Left lung (tissue), 14 donors: ENCODE measurements at regions of chr4 and their contacts with region 1.

Region 1: GRCh38 chr4:186297013-186297645 is 31.1 kb downstream of the F11 start:
- DNase-seq: peak in 2 of 4 donors; percentile 54 to 70
- ATAC-seq: peak; percentile 73
- H3K4me3 ChIP-seq: no peak overlapping the region
- H3K27ac ChIP-seq: no peak overlapping the region
- H3K4me1 ChIP-seq: no peaks in the 10 kb centered on the region
- H3K27me3 ChIP-seq: peaks cover 14 to 29% of the 10 kb centered on the region in 2 donors
- CTCF ChIP-seq: peak; percentile 45 to 65

Region 2: DNA sequence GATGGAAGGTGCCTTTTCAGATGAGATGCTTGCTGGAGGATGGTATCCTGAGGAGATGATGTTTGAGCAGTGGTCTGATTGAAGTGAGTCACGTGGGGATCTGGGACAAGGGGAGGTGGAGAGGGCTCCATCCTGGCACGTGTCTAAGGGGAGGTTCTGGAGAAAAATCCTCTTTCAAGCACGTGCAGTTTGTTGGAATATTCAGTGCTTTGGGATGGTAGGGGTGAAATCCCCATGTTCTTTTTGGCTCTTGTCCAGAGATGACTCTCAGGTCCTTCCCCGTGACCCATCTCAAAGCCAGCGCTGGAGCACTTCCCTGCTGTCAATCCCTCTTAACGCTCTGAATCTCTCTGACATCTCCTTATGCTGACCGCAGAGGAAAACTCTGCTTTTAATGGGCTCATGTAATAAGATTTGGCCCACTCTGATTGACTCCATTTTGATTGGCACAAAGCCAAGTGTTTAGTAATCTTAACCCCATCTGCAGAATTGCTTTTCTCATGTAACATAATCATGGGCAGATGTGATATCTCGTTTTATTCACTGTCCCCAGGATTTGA is 80.6 kb before region 1 on chr4:
- intact Hi-C with region 1: no loop called
- DNase-seq: no peak
- ATAC-seq: no peak
- H3K4me3 ChIP-seq: no peak overlapping the region
- H3K27ac ChIP-seq: no peak overlapping the region
- H3K4me1 ChIP-seq: no peaks in the 10 kb centered on the region
- H3K27me3 ChIP-seq: no peaks in the 10 kb centered on the region
- CTCF ChIP-seq: no peak

Region 3: GRCh38 chr4:186570193-186570996 is 273.3 kb after region 1 on chr4:
- intact Hi-C with region 1: loop called in 1 of 2 experiments (anchors 10 kb)
- DNase-seq: peak in 2 of 4 donors; percentile 23 to 30
- ATAC-seq: peak; percentile 86
- H3K4me3 ChIP-seq: no peak overlapping the region
- H3K27ac ChIP-seq: no peak overlapping the region
- H3K4me1 ChIP-seq: peaks cover 0 to 3% of the 10 kb centered on the region in 2 donors
- H3K27me3 ChIP-seq: no peaks in the 10 kb centered on the region
- CTCF ChIP-seq: no peak

Region 4: GRCh38 chr4:186587416-186588018 is 290.4 kb after region 1 on chr4:
- intact Hi-C with region 1: loop called in 1 of 2 experiments (anchors 5 kb)
- DNase-seq: peak in 3 of 4 donors; percentile 62 to 77 (median 63)
- ATAC-seq: peak; percentile 87
- H3K4me3 ChIP-seq: no peak overlapping the region
- H3K27ac ChIP-seq: no peak overlapping the region
- H3K4me1 ChIP-seq: no peaks in the 10 kb centered on the region
- H3K27me3 ChIP-seq: no peaks in the 10 kb centered on the region
- CTCF ChIP-seq: peak; percentile 86 to 90